ENCODE measurements at regions of chr11 and their contacts with region 1.

Region 1: DNA sequence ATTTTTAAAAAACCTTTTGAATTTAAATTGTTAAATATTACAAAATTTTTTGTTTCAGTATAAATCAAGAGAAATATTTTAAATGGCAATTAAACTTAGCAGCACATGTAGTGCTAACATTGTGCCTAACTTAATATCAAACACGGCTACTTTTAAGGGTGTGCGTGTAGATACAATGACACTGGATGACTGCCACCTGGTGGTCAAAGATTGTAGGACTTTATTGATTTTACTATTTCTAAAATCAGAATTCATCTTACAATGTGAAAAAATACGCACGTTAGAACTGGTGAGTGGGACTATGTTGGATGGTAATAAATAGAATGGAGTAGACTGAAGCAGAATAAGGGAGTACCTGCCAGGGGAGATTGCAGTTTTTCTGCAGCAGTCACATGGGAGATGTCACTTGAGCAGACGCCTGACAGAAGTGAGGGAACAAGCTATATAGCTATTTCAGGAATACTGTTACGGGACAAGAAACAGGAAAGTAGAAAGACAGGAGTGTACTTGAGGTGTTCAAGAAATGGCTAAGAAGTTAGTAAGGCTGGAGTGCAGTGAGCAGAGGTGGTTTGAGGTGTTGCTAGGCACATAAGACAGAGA is 52.9 kb downstream of the UVRAG start:
- DNase-seq: no peak
- H3K4me3 ChIP-seq: no peak overlapping the region
- H3K27ac ChIP-seq: no peak overlapping the region
- H3K4me1 ChIP-seq: peaks cover 0 to 9% (median 3%) of the 10 kb centered on the region in 4 donors
- H3K27me3 ChIP-seq: no peaks in the 10 kb centered on the region
- CTCF ChIP-seq: peak; percentile 79 to 88

Region 2: GRCh38 chr11:75733431-75734107 is 134.3 kb before region 1 on chr11:
- intact Hi-C with region 1: no loop called
- DNase-seq: no peak
- H3K4me3 ChIP-seq: no peak overlapping the region
- H3K27ac ChIP-seq: no peak overlapping the region
- H3K4me1 ChIP-seq: peaks cover 0 to 23% (median 12%) of the 10 kb centered on the region in 4 donors
- H3K27me3 ChIP-seq: no peaks in the 10 kb centered on the region
- CTCF ChIP-seq: no peak

Region 3: DNA sequence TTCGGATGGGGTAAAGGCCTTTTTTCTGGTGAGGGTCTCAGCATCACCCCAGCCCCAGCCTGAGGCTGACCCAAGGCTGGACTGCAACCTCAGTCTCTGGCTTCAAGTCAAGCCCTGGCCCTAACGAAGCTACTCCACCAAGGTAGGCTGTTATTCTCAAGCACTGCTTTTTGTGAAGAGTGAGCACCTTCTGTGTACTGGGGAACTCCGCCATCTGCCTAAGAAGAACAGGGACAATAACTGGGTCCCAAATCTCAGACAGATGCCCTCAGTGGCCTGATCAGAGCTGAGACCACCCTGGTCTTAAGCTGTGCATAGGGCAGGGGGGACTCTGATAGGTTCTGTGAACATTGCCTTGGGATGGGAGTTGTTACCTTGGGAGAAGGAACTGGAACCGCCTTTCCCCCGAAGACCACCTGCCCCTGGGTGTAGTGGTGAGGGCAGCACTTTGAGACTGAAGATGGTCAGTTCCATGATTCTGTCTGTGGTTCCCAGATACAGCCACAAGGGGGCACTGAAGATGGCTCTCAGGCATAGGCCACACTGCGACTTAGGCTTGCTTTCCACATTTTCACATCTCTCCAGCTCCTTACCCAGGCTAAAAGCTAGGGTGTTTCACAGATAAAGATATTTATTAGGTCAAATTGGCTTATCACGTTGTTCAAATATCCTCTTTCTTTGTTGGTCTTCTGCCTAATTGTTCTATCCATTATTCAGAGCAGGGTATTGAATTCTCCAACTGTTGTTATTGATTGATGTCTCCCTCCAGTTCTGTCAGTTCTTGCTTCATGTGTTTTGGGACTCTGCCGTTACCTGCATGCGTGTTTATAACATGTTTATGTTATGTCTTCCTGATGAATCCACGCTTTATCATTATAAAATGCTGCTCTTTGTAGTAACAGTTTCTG is 64.7 kb before region 1 on chr11:
- intact Hi-C with region 1: loop called (anchors 2 kb)
- DNase-seq: peak; percentile 80 to 81
- H3K4me3 ChIP-seq: no peak overlapping the region
- H3K27ac ChIP-seq: no peak overlapping the region
- H3K4me1 ChIP-seq: peaks cover 0 to 14% (median 0%) of the 10 kb centered on the region in 4 donors
- H3K27me3 ChIP-seq: no peaks in the 10 kb centered on the region
- CTCF ChIP-seq: peak; percentile 89 to 93

Region 4: DNA sequence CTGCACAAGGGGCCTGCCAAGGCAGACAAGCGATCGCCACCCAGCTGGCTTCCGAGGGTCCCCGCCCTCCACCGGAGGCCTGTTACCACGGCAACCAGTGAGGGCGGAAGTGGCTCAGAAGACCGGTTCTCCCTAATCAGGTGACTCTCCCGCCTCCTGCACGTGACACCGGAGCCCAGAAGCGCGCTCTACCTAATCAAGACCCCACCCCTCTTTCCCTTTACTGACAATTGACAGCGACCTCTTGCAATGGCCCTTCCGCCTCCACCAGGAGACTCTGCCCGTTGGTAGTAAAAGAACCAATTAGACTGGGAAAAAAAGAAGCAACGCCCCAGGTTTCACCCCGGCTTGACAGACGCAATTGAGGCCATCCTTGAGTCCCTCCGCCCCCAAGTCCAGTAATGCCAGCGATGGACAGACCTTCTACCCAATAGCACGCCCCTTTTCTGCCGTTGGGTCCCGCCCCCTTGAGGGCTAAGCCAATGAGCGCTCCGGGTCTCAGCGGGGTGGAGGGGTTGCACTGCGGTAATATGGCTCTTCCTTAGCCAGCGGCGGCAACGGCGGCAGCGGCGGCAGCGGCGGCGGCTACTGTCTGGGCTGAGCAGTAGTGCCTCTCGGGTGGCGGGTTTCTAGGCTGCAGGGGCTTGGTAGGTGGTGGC is 53.1 kb before region 1 on chr11 and contains the start of gene UVRAG:
- intact Hi-C with region 1: loop called (anchors 5 kb)
- DNase-seq: peak; percentile 99
- H3K4me3 ChIP-seq: peak within 1 kb of the TSS; percentile 87 to 91
- H3K27ac ChIP-seq: peak within 1 kb of the TSS; percentile 91 to 94
- H3K4me1 ChIP-seq: peaks cover 0 to 45% (median 11%) of the 10 kb centered on the region in 4 donors
- H3K27me3 ChIP-seq: no peaks in the 10 kb centered on the region
- CTCF ChIP-seq: peak; percentile 18 to 51

Measured in tibial artery (tissue), 4 donors.